ENCODE measurements at regions of chr1 and their contacts with region 1.

Region 1: GRCh38 chr1:174159252-174160108 is at the start of gene RABGAP1L:
- DNase-seq: peak; percentile 70 to 92
- H3K4me3 ChIP-seq: peak within 1 kb of the TSS; percentile 81
- H3K27ac ChIP-seq: peak within 1 kb of the TSS; percentile 18; the same call in 1 of the 2 replicates
- H3K4me1 ChIP-seq: peaks cover 17% of the 10 kb centered on the region
- H3K27me3 ChIP-seq: no peaks in the 10 kb centered on the region
- CTCF ChIP-seq: no peak
- total RNA-seq, gene RABGAP1L: 56.7 and 57.4 TPM in 2 replicates

Region 2: DNA sequence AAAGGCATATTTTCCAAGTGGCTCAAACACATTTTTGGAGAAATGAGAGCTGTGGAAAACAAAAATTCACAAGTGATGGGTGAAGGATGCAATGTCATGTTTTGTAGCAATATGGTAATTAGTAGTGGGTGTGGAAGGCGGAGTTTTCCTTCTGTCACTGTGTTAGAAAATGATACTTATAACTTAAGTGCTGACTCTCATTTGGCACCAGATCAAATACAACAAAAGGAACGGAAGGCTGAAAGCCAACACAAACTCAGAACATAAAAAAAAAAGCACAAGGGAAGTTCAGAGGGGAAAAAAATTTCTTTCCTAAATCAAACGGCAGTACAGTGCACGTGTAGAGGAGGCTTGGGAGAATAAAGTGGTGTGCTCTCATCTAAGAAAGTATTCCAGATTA is 1108.6 kb before region 1 on chr1 and contains the start of gene TNFSF18:
- CTCF ChIA-PET with region 1: no interaction called
- POLR2A ChIA-PET with region 1: no interaction called
- intact Hi-C with region 1: loop called (anchors 10 kb)
- DNase-seq: no peak
- H3K4me3 ChIP-seq: no peak within 1 kb of the TSS
- H3K27ac ChIP-seq: peak within 1 kb of the TSS; percentile 87; the same call in 1 of the 2 replicates
- H3K4me1 ChIP-seq: peaks cover 36% of the 10 kb centered on the region
- H3K27me3 ChIP-seq: no peaks in the 10 kb centered on the region
- CTCF ChIP-seq: no peak
- total RNA-seq, gene TNFSF18: 0.81 TPM in 1 of 2 replicates, not detected in the other

Region 3: GRCh38 chr1:173914366-173914871 is 245.1 kb before region 1 on chr1:
- CTCF ChIA-PET with region 1: no interaction called
- POLR2A ChIA-PET with region 1: no interaction called
- intact Hi-C with region 1: loop called (anchors 10 kb)
- DNase-seq: peak in 1 of 2 experiments; percentile 23
- H3K4me3 ChIP-seq: no peak overlapping the region
- H3K27ac ChIP-seq: no peak overlapping the region
- H3K4me1 ChIP-seq: no peaks in the 10 kb centered on the region
- H3K27me3 ChIP-seq: no peaks in the 10 kb centered on the region
- CTCF ChIP-seq: peak; percentile 76

Region 4: DNA sequence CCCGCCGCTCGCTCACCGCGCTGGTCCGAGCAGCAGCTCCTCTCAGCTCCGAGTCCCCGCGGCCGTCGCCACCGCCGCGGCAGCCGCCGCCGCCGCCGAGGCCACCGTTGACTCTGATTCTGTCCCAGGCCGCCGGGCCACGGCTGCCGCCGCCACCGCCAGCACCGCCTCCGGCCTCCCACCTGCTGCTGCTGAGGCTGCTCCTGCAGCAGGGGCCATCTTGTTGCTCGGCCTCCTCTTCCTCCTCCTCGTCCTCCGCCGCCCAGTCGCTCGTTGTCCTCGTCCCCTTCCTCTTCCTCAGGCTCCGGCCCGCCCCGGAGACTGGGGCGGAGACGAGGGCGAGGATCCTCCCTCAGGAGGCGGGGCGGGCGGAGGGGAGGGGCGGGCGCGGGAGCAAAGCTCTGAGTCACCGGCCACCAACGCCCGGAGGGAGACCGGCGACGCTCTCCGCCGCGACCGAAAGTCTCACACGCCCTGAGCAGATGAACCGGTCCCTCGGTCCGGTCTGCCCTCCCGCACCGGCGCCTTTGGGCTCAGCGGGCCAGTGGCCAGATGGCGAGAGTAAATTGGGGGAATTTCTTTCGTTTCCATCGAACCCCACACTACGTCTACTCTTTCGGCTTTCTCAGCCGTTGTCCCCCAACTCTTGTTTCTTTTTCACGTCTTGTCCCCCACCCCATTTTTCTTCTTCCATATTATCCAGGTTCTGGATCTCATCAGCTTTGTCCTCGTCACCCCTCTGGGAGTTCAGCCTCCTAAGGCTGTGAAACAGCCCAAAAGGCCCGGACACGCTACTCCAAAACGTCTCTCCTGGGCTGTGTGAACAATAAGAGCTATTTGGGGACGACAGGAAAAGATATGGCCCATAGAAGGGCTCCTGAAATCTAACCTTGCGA is 137.2 kb before region 1 on chr1 and contains the start of gene RC3H1:
- CTCF ChIA-PET with region 1: interaction called, 6 read pairs
- POLR2A ChIA-PET with region 1: no interaction called
- intact Hi-C with region 1: loop called (anchors 5 kb)
- DNase-seq: peak; percentile 80 to 90
- H3K4me3 ChIP-seq: peak within 1 kb of the TSS; percentile 76
- H3K27ac ChIP-seq: peak within 1 kb of the TSS; percentile 93
- H3K4me1 ChIP-seq: peaks cover 41% of the 10 kb centered on the region
- H3K27me3 ChIP-seq: no peaks in the 10 kb centered on the region
- CTCF ChIP-seq: no peak
- total RNA-seq, gene RC3H1: 25.2 and 29.5 TPM in 2 replicates

Region 5: DNA sequence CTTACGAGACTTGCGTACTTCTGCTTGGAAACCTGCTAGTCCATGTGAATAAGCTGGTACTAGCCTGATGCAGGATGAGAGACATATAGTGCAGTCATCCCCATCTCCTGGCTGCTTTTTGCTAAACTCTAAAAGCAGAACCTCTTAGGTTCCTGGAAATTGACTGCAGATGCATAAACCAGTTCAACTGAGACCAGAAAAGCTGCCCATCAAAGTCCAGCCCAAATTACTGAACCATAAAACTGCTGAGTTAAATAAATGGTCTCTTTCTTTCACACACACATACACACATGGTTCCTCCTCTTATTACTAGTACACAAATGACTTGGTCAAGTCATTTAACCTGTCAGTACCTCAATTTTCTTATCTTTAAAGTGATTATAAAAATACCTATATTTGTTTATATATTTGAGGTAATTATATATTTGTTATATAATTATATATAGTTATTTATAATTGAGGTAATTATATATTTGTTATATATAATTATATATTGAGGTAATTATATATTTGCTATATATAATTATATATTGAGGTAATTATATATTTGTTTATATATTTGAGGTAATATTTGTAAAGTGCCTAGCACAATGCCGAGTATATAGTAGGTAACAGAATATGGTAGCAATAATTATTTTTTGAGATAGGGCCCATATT is 25.3 kb before region 1 on chr1:
- CTCF ChIA-PET with region 1: no interaction called
- POLR2A ChIA-PET with region 1: no interaction called
- intact Hi-C with region 1: no loop called
- DNase-seq: no peak
- H3K4me3 ChIP-seq: no peak overlapping the region
- H3K27ac ChIP-seq: no peak overlapping the region
- H3K4me1 ChIP-seq: no peaks in the 10 kb centered on the region
- H3K27me3 ChIP-seq: no peaks in the 10 kb centered on the region
- CTCF ChIP-seq: no peak

Region 6: DNA sequence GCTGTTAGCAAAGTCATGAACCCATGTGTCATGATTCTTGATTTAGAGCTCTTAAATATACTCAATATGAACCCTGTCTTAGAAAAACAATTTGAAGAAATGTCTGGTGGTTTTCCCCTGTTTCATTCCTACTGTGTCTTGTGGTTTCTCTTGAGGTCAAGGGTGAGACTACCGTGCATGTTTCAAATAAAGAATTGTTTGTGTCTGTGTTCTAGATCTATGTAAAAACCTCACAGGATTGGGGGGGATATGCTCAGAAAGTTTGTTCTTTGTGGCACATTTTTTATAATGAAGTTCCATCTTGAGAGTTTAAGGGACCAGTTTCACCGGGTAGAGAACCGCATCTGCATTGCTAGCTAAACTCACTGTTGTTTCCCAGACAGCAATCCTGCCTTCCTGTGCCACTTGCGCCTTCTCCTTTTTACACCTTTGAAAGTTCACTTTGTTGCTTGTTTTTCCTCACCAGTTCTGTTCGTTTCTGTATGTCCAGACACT is 809.3 kb after region 1 on chr1:
- CTCF ChIA-PET with region 1: interaction called, 11 read pairs
- POLR2A ChIA-PET with region 1: no interaction called
- intact Hi-C with region 1: no loop called
- DNase-seq: peak in 1 of 2 experiments; percentile 85
- H3K4me3 ChIP-seq: no peak overlapping the region
- H3K27ac ChIP-seq: peak overlapping the region; percentile 58
- H3K4me1 ChIP-seq: peaks cover 74% of the 10 kb centered on the region
- H3K27me3 ChIP-seq: no peaks in the 10 kb centered on the region
- CTCF ChIP-seq: no peak

Measured in PC-9 (cell line).